Posterior vena cava (tissue), 2 donors: ENCODE measurements at regions of chr19 and their contacts with region 1.

Region 1: GRCh38 chr19:49766007-49766937 is 529 bp upstream of the AP2A1 start:
- DNase-seq: peak; percentile 100

Region 2: GRCh38 chr19:49801966-49802690 is 35.9 kb after region 1 on chr19:
- intact Hi-C with region 1: loop called (anchors 5 kb)
- DNase-seq: peak; percentile 96

Region 3: GRCh38 chr19:49808711-49809159 is 42.5 kb after region 1 on chr19:
- intact Hi-C with region 1: loop called (anchors 5 kb)
- DNase-seq: peak; percentile 98

Region 4: GRCh38 chr19:49850473-49851342 is 84.4 kb after region 1 on chr19 and contains the start of gene PTOV1:
- intact Hi-C with region 1: no loop called
- DNase-seq: peak; percentile 98
- total RNA-seq, gene PTOV1: 78.7 to 95.2 TPM